Prostate gland (tissue), 2 donors: ENCODE measurements at regions of chr14 and their contacts with region 1.

Region 1: DNA sequence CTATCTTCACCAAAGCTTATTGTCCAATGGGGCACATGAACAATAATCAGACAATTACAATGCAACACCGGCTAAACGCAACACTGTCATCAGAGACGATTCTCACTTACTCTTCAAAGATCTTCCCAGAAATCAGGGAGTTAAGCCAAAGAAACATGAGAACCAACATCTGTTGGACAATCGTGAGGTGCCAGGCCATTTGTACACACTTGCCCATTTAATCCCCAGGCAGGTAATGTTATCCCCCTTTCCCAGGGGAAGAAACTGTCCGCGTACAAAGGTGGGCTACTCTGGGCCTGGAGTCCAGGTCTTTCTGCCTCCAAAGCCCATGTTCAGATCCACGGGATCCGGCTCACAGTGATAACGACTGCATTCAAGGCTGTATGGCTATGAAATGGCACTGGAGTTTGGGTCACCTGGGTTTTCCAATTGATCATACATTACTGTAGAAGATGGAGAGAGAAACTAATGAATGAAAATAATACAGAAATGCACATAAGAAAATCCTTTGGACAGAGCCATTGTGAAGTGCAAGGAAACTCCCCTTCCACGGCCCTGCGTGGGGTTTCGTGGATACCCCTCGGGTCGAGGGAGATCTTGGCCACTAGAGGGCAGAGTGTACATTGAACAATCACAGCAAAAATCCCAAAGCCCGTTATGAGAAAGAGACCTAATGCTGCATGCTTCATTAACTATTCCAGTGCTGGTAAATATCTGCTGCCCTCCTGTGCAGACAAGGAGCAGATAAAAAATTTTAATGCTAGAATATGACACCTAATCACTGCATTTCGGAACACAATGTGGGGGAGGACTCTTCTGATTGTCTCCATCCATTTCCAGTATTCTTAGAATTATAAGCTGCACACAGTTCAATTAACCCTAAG is 111.4 kb downstream of the EGLN3 start:
- DNase-seq: peak; percentile 19
- H3K4me3 ChIP-seq: no peak overlapping the region
- H3K27ac ChIP-seq: no peak overlapping the region
- H3K4me1 ChIP-seq: no peaks in the 10 kb centered on the region
- H3K27me3 ChIP-seq: no peaks in the 10 kb centered on the region
- CTCF ChIP-seq: peak; percentile 51 to 77 (median 72)
- POLR2A ChIP-seq: no peak

Region 2: DNA sequence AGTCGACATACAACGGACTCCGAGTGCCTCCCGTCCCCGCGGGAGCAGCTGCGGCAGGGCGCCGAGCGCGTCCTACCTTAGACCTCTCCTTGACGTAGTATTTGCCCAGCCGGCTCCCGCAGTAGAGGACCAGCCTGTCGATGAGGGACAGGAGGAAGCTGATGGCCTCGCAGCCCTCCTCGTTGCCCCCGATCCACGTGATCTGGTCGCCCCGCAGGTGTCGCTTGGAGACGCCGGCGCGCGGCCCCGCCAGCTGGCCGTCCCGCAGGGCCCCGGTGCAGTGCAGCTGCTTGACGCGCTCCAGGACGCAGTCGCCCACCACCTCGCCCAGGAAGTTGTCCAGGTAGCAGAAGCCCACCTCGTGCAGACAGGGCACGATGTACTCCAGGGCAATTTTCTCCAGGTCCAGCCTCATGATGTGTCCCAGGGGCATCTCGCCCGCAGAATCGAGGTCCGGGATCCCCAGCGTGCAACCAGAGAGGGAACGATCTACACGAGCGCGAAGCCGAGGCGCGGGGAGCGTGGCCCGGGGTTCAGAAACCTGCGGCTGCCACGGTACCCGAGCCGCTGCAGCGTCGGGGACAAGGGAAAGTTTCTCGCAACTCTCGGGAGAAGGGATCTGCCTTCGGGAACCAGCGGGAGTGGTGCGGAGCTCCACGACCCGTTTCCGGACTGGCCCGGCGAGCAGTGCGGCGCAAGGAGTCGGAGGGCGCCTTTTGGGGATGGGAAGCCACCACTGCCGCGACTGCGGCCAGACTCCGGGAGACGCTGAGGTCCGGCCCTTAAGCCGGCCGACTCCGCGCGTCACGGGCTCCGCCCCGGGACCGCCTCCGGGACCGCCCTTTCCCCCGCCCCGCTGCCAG is 111.1 kb after region 1 on chr14 and contains the start of gene EGLN3:
- intact Hi-C with region 1: loop called (anchors 5 kb)
- DNase-seq: peak; percentile 90
- H3K4me3 ChIP-seq: peak within 1 kb of the TSS; percentile 33 to 39
- H3K27ac ChIP-seq: peak within 1 kb of the TSS; percentile 15 to 20
- H3K4me1 ChIP-seq: peaks cover 5% of the 10 kb centered on the region
- H3K27me3 ChIP-seq: no peaks in the 10 kb centered on the region
- CTCF ChIP-seq: no peak
- POLR2A ChIP-seq: peak; percentile 99
- total RNA-seq, gene EGLN3: 6.1 to 6.8 TPM

Region 3: GRCh38 chr14:34322940-34323418 is 483.5 kb after region 1 on chr14:
- intact Hi-C with region 1: loop called (anchors 10 kb)
- DNase-seq: peak; percentile 15
- H3K4me3 ChIP-seq: no peak overlapping the region
- H3K27ac ChIP-seq: no peak overlapping the region
- H3K4me1 ChIP-seq: no peaks in the 10 kb centered on the region
- H3K27me3 ChIP-seq: no peaks in the 10 kb centered on the region
- CTCF ChIP-seq: peak; percentile 39 to 77 (median 54)
- POLR2A ChIP-seq: no peak